Posterior cingulate gyrus (tissue), 11 donors: ENCODE measurements at regions of chr6 and their contacts with region 1.

Region 1: GRCh38 chr6:53794720-53795253 is at the start of gene LRRC1:
- DNase-seq: peak; percentile 83 to 98 (median 90)

Region 2: GRCh38 chr6:53829698-53830221 is 35.0 kb after region 1 on chr6:
- intact Hi-C with region 1: loop called (anchors 5 kb)
- DNase-seq: no peak

Region 3: GRCh38 chr6:53862662-53863462 is 68.1 kb after region 1 on chr6:
- intact Hi-C with region 1: loop called (anchors 10 kb)
- DNase-seq: peak in 8 of 10 donors; percentile 19 to 92 (median 56)